Caco-2 (cell line): ENCODE measurements at regions of chr16 and their contacts with region 1.

Region 1: GRCh38 chr16:46808997-46809396 is 22.0 kb downstream of the C16orf87 start:
- DNase-seq: no peak
- H3K4me3 ChIP-seq: no peak overlapping the region
- H3K4me3 Mint-ChIP-seq: no peak overlapping the region
- H3K27ac Mint-ChIP-seq: no peak overlapping the region
- H3K4me1 ChIP-seq: peaks cover 7% of the 10 kb centered on the region
- H3K4me1 Mint-ChIP-seq: peaks cover 18% of the 10 kb centered on the region
- H3K27me3 ChIP-seq: no peaks in the 10 kb centered on the region
- H3K27me3 Mint-ChIP-seq: no peaks in the 10 kb centered on the region
- CTCF ChIP-seq: no peak

Region 2: DNA sequence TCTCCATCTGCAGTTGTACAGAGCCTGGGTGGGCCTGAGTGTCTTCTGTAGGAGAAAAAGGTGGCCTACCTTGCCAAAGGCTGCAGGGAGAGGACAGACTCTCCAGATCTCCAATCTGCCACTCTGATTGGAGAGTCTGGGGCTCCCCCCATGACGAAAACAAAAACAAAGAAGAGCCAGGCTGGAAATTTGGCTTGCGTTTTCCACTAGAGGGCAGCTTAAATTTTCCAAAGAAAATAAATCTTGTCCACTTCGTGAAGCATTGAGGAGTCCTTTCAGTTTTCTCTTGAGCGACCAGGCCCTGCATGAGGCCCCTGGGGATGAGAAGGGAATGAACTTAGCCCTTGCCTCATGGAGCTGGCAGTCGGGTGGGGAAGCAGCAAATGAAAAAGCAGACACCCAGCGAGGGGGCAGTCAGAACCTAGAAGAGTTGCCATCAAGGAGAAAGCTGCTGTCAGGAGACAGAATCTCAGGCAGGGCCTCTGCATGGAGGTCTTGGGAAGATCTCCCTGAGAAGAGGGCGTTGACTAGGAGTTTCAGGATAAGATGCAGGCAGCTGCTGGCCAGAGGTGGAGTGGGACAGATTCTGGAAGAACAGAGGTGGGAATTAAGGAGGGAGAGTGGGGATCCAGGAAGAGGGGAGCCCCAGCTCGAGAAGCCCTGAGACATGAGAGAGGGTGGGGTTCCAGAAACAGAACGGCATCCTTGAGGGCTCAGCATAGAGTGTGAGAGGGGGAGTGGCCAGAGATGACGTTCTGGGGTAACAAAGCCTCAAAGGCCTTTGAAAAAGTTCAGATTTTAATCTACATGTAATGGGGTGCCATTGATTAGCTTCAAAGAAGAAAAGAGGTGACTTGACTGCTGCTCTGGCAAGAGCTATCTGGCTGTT is 179.4 kb before region 1 on chr16:
- CTCF ChIA-PET with region 1: no interaction called
- POLR2A ChIA-PET with region 1: no interaction called
- intact Hi-C with region 1: loop called (anchors 5 kb)
- DNase-seq: peak in 1 of 2 experiments; percentile 26
- H3K4me3 ChIP-seq: no peak overlapping the region
- H3K4me3 Mint-ChIP-seq: no peak overlapping the region
- H3K27ac Mint-ChIP-seq: no peak overlapping the region
- H3K4me1 ChIP-seq: peaks cover 6% of the 10 kb centered on the region; the same call in 1 of the 2 replicates
- H3K4me1 Mint-ChIP-seq: no peaks in the 10 kb centered on the region
- H3K27me3 ChIP-seq: no peaks in the 10 kb centered on the region
- H3K27me3 Mint-ChIP-seq: no peaks in the 10 kb centered on the region
- CTCF ChIP-seq: peak; percentile 33 to 50